WTC11 (cell line): ENCODE measurements at regions of chr1 and their contacts with region 1.

Region 1: DNA sequence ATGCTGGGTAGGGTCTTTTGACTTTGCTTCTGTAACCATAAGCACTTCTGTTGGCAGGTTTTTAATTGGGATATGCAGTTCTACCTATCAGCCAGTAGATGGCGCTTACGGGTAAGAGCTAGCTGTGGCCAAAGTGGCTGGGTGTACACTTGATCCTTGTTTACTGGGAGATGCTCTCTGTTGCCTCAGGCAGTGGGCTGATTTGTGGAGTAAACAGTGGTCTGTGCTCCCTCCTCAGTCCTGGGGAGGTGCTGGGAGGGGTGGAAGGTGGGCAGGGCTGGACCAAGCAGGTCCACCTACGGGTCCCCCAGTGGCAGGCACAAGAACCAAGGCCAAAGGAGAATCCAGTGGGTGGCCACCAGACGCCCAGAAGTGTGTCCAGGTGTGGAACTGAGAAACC is 43.4 kb downstream of the RALGPS2 start:
- DNase-seq: no peak
- ATAC-seq: peak; percentile 83
- H3K4me3 Mint-ChIP-seq: no peak overlapping the region
- H3K27ac Mint-ChIP-seq: no peak overlapping the region; the same call in 1 of the 2 replicates
- H3K4me1 Mint-ChIP-seq: peaks cover 13% of the 10 kb centered on the region
- H3K27me3 Mint-ChIP-seq: no peaks in the 10 kb centered on the region; the same call in 1 of the 2 replicates
- CTCF ChIP-seq: peak; percentile 93

Region 2: DNA sequence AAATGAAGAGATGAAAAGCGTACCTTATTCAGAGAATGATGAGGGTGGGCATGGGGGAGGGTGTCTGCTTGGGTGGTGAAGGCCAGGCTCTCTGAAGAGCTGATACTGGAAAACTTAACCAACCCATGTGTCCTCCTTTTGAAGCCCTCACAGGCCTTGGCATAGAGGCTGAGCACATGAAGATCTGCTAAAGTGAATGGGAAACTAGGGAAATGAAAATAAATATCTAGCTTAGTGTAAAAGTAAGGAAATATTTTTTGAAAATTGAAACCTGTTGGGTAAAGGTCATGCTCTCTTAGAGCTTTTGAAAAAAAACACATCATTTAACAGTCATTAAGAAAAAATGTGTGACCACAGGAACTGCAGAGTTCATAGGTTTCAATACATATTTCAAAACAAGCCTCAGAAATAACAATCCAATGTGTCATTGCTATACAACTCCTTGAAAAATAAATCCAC is 83.9 kb before region 1 on chr1:
- CTCF ChIA-PET with region 1: no interaction called
- POLR2A ChIA-PET with region 1: no interaction called
- DNase-seq: no peak
- ATAC-seq: no peak
- H3K4me3 Mint-ChIP-seq: no peak overlapping the region
- H3K27ac Mint-ChIP-seq: no peak overlapping the region
- H3K4me1 Mint-ChIP-seq: no peaks in the 10 kb centered on the region
- H3K27me3 Mint-ChIP-seq: no peaks in the 10 kb centered on the region
- CTCF ChIP-seq: no peak

Region 3: DNA sequence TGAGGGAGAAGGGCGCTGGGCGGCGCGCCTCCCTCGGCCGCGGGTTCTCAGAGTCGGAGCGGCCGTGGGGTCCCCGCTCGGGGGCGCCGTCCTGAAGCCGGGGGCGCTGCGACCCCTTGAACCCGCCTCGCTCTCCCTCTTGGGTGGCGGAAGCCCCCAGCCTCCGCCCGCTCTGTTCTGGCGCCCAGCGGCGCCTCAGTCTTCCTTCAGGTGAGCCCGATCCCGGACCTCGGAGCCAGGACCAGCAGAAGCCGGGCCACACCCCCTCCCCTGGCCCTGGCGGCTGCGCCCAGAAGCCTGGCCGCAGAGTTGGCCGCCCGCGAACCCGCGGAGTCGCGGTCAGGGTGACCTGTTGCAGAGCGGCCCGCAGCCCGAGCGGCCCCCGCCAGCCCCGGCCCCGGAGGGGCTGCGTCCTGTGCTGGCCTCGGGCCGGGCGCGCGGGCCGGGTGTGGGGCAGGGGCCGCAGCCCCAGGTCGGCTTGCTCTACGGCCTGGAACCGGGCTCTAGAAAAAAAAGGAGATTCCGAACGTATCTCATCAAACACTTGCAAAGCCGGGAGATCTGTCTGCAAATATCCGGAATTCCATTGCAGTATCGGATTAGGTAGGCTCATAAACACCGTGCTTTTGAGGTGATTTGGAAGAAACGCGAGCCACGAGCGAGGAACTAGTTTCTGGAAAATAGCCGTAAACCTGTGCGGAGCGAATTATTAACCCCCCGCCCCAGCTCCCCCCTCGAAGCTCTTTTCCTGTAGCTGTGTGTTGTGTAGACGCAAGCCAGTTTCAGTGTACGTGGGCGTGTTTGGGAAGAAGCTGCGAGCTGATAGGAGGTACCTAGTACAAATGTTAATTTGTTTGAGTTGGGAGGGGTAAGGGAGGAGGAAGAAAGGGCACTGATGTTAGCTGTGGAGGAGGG is 42.6 kb before region 1 on chr1:
- CTCF ChIA-PET with region 1: interaction called, 10 read pairs
- POLR2A ChIA-PET with region 1: no interaction called
- DNase-seq: peak; percentile 62
- ATAC-seq: peak; percentile 80
- H3K4me3 Mint-ChIP-seq: peak overlapping the region; percentile 88
- H3K27ac Mint-ChIP-seq: peak overlapping the region; percentile 94
- H3K4me1 Mint-ChIP-seq: peaks cover 31% of the 10 kb centered on the region
- H3K27me3 Mint-ChIP-seq: no peaks in the 10 kb centered on the region
- CTCF ChIP-seq: no peak

Region 4: DNA sequence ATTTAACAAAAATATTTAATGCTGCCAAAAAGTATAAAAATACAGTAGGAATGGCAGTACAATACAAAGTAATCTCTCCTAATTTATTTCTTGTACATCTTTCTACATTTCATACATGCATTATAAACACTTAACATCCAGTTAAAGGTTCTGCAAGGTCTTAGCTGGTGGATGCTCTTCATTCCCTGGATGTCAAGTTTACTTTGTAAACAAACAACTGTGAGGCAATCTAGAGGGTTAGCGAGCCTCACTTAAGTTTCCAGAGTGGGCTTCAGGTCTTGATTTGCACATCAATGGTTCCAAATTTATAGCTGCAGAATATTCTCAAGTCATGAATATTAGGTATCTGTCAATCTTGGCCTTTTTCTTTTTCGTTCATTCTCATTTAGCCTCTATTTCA is 22.1 kb before region 1 on chr1:
- CTCF ChIA-PET with region 1: no interaction called
- POLR2A ChIA-PET with region 1: no interaction called
- DNase-seq: no peak
- ATAC-seq: no peak
- H3K4me3 Mint-ChIP-seq: no peak overlapping the region
- H3K27ac Mint-ChIP-seq: no peak overlapping the region
- H3K4me1 Mint-ChIP-seq: no peaks in the 10 kb centered on the region
- H3K27me3 Mint-ChIP-seq: no peaks in the 10 kb centered on the region
- CTCF ChIP-seq: no peak

Region 5: DNA sequence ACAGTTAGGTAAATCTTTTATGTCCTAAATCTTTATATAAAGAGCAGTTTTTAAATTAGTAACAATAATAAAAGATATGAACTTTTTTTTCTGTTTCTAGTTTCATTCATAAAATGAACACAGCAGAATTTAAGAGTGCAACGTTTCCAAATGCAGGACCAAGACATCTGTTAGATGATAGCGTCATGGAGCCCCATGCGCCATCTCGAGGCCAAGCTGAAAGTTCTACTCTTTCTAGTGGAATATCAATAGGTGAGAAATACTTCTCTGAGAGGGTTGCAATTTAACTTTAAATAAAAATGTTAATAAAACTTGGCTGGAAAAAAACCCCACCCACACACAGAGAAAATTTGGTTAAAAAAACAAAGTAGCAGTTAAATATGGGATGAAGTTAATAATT is 117.4 kb after region 1 on chr1:
- CTCF ChIA-PET with region 1: no interaction called
- POLR2A ChIA-PET with region 1: no interaction called
- DNase-seq: no peak
- ATAC-seq: no peak
- H3K4me3 Mint-ChIP-seq: no peak overlapping the region
- H3K27ac Mint-ChIP-seq: no peak overlapping the region
- H3K4me1 Mint-ChIP-seq: no peaks in the 10 kb centered on the region
- H3K27me3 Mint-ChIP-seq: no peaks in the 10 kb centered on the region
- CTCF ChIP-seq: no peak